Ascending aorta (tissue), 2 donors: ENCODE measurements at regions of chr7 and their contacts with region 1.

Region 1: GRCh38 chr7:139431010-139431409 is 52.5 kb downstream of the KLRG2 start:
- DNase-seq: no peak
- H3K4me3 ChIP-seq: no peak overlapping the region
- H3K27ac ChIP-seq: peak overlapping the region; percentile 93 to 94
- H3K4me1 ChIP-seq: peaks cover 16 to 39% of the 10 kb centered on the region in 2 donors
- H3K27me3 ChIP-seq: no peaks in the 10 kb centered on the region
- CTCF ChIP-seq: no peak

Region 2: GRCh38 chr7:139452958-139453672 is 22.1 kb after region 1 on chr7:
- intact Hi-C with region 1: loop called (anchors 2 kb)
- DNase-seq: peak in 1 of 2 donors; percentile 73
- H3K4me3 ChIP-seq: peak overlapping the region in 1 of 2 donors; percentile 57
- H3K27ac ChIP-seq: peak overlapping the region; percentile 75 to 82
- H3K4me1 ChIP-seq: peaks cover 6 to 10% of the 10 kb centered on the region in 2 donors
- H3K27me3 ChIP-seq: no peaks in the 10 kb centered on the region
- CTCF ChIP-seq: peak in 2 of 3 experiments; percentile 12 to 26

Region 3: DNA sequence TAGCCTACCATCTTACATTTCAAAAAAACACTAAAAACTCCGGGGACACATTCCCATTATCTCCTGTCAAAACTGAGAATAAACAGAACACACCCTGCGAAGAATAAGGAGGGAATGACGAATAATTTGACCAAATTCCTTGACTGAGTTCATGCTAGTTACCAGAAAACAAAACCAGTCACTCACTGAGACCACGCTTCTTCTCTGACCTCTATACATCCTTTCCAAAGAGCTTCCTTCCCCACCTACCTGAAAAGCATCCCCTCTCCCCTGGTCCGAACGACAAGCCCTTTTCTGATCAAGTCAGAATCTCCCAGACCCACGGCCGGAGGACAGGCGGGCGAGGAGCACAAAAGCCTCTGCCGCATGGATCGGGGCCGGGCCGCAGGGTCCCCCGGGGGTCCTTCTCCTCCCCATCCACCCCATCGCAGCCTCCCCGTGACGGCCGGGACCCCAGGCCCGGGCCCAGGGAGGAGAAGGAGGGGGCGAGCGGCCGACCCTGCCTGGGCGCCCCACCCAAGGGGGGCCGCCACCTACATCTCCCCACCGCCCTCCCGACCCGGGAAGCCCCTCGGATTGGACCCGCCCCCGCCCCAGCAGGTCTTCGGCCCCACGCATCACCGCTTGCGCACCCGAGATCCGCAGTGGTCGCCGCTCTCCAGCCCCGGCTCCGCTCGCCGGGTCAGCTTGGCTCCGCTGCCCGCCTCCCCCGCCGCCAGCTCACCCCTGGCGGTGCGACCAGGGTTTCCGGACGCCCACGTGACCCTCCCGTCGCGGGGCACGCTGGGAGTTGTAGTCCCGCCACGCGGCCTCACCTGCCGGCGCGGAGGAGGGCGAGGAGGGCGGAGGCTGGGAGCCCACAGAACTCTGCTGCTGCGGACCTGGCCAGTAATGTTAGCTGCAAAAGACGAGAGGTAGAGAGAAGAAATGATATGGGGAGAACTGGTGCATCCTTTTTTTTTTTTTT is 967.1 kb after region 1 on chr7 and contains the start of gene SLC37A3:
- intact Hi-C with region 1: loop called (anchors 10 kb)
- DNase-seq: peak; percentile 37 to 89
- H3K4me3 ChIP-seq: peak within 1 kb of the TSS; percentile 81
- H3K27ac ChIP-seq: peak within 1 kb of the TSS; percentile 76 to 83
- H3K4me1 ChIP-seq: peaks cover 0 to 3% of the 10 kb centered on the region in 2 donors
- H3K27me3 ChIP-seq: no peaks in the 10 kb centered on the region
- CTCF ChIP-seq: peak in 1 of 3 experiments; percentile 29
- total RNA-seq, gene SLC37A3: 15.0 TPM